Activated CD4-positive, alpha-beta T cell treated with anti-CD3 and anti-CD28 coated beads, Interleukin-2, amount 10 ng/mL, durations not matched to agents 24 days and 14 days (primary cell): ENCODE measurements at regions of chr5 and their contacts with region 1.

Region 1: DNA sequence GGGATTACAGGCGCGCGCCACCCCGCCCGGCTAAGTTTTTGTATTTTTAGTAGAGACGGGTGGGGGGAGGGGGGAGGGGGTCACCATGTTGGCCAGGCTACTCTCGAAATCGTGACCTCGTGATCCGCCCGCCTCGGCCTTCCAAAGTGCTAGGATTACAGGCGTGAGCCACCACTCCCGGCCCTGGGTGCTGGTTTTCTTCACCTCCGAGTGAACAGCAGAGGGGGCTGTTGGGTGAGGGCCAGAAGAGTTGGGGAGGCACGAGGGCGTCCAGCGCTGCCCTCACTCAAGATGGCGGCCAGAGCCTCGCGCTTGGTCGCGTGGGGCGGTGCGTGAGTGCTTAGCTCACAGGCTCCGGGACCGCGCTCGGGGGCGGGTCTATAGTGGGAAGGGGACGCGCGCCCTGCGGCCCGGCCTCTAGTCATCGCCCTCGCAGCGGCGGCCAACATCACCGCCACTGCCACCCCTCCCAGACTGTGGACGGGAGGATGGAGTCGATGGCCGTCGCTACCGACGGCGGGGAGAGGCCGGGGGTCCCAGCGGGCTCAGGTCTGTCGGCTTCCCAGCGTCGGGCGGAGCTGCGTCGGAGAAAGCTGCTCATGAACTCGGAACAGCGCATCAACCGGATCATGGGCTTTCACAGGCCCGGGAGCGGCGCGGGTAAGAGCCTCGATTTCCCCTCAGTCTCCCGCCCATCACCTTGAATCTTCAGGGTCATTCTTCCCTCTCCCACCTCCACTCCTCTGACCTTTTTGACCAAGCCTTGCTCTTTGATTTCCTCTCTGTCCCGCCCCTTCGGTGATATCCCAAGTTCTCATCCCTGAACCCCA is at the start of gene CAMLG:
- DNase-seq: peak; percentile 99
- H3K4me3 Mint-ChIP-seq: peak within 1 kb of the TSS; percentile 94
- H3K27ac Mint-ChIP-seq: peak within 1 kb of the TSS; percentile 91
- H3K4me1 Mint-ChIP-seq: peaks cover 13% of the 10 kb centered on the region
- H3K27me3 Mint-ChIP-seq: no peaks in the 10 kb centered on the region
- total RNA-seq, gene CAMLG: 28.2 and 28.3 TPM in 2 replicates

Region 2: GRCh38 chr5:133907075-133907474 is 831.3 kb before region 1 on chr5:
- intact Hi-C with region 1: no loop called
- DNase-seq: no peak
- H3K4me3 Mint-ChIP-seq: no peak overlapping the region
- H3K27ac Mint-ChIP-seq: no peak overlapping the region
- H3K4me1 Mint-ChIP-seq: no peaks in the 10 kb centered on the region
- H3K27me3 Mint-ChIP-seq: no peaks in the 10 kb centered on the region

Region 3: DNA sequence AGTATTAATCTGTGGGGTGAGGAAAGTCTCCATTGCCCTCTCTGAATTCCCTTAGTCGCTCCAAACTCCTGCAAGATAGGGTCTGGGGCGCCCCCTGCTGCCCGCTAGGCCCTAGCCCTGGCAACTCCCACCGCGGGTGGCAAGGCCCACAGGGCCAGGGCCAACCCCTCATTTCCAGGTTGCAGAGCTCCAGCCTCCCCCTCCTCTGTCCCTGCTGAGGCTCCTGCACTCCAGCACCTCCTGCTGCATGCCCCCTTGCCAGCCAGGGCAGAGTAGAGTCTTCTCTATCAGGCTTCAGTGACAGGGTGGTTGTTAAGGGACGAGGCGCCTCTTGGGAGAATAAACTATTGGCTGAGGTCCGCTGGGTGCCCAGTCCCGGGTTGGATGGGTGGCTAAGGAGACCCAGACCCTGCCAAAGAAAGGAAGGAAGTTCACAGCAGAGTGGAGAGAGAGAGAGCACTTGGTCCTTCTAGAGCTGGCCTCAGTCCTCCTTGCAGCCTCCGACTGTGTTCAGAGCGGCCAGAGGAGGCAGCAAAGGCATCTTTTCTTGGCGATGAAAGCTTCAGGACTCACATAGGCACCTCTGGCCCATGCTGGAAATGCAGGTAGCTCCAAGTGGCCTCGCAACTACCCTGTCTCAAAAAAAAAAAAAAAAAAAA is 151.4 kb before region 1 on chr5:
- intact Hi-C with region 1: no loop called
- DNase-seq: peak; percentile 95
- H3K4me3 Mint-ChIP-seq: peak overlapping the region; percentile 51
- H3K27ac Mint-ChIP-seq: peak overlapping the region; percentile 84
- H3K4me1 Mint-ChIP-seq: peaks cover 16% of the 10 kb centered on the region
- H3K27me3 Mint-ChIP-seq: no peaks in the 10 kb centered on the region

Region 4: GRCh38 chr5:134609232-134609851 is 129.0 kb before region 1 on chr5:
- intact Hi-C with region 1: loop called (anchors 1 kb)
- DNase-seq: peak; percentile 72
- H3K4me3 Mint-ChIP-seq: peak overlapping the region; percentile 76
- H3K27ac Mint-ChIP-seq: peak overlapping the region; percentile 95
- H3K4me1 Mint-ChIP-seq: peaks cover 51% of the 10 kb centered on the region
- H3K27me3 Mint-ChIP-seq: no peaks in the 10 kb centered on the region

Region 5: DNA sequence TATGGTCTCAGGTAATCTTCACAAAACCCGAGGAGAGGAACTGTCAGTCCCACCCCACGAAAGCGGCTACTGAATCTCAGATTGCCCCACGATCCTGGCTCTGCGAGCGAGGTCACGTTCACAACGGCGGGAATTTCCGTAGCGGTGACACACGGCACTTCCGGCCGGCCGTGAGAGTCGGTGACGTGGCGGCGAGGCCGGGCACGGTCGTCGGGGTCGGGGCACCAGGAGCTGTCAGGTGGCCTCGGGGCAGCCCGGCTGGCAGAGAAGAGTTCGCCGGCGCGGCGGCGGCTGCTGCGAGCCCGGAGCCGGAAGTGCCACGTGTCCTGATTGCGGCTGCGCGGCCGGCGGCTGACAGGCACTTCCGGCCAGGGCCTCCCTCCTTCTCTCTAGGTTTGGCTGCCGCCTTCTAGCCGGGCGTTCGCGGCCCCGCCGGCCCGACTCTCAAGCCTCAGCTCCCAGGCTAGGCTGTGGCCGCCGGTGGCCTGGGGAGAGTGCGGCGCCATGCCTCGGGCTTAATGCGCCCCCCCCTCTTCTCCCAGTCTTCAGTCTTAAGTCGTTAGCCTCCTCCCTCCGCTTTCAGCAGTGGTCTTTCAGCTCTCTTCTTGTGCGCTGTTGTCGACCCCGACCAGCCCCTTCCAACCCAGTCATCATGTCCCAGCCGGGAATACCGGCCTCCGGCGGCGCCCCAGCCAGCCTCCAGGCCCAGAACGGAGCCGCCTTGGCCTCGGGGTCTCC is 89.8 kb before region 1 on chr5 and contains the start of gene SEC24A:
- intact Hi-C with region 1: loop called (anchors 1 kb)
- DNase-seq: peak; percentile 97
- H3K4me3 Mint-ChIP-seq: peak within 1 kb of the TSS; percentile 94
- H3K27ac Mint-ChIP-seq: peak within 1 kb of the TSS; percentile 97
- H3K4me1 Mint-ChIP-seq: peaks cover 23% of the 10 kb centered on the region
- H3K27me3 Mint-ChIP-seq: no peaks in the 10 kb centered on the region
- total RNA-seq, gene SEC24A: 29.4 and 31.2 TPM in 2 replicates

Region 6: DNA sequence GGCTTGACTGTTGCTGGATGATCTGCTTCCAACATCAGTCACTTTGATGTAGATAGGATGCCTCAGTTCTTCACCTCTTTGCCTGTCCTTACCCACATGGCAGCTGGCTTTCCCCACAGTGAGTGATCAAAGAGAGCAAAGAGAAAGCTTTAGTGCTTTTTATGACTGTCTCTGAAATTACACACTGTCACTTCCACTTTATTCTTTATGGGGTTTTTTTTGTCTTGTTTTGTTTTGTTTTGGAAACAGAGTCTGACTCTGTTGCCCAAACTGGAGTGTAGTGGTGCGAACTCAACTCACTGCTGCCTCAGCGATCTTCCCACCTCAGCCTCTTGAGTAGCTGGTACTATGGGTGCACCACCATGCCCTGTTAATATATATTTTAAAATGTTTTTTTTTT is 75.1 kb after region 1 on chr5:
- intact Hi-C with region 1: loop called (anchors 2 kb)
- DNase-seq: peak; percentile 78
- H3K4me3 Mint-ChIP-seq: no peak overlapping the region
- H3K27ac Mint-ChIP-seq: peak overlapping the region; percentile 82
- H3K4me1 Mint-ChIP-seq: peaks cover 9% of the 10 kb centered on the region
- H3K27me3 Mint-ChIP-seq: no peaks in the 10 kb centered on the region

Region 7: DNA sequence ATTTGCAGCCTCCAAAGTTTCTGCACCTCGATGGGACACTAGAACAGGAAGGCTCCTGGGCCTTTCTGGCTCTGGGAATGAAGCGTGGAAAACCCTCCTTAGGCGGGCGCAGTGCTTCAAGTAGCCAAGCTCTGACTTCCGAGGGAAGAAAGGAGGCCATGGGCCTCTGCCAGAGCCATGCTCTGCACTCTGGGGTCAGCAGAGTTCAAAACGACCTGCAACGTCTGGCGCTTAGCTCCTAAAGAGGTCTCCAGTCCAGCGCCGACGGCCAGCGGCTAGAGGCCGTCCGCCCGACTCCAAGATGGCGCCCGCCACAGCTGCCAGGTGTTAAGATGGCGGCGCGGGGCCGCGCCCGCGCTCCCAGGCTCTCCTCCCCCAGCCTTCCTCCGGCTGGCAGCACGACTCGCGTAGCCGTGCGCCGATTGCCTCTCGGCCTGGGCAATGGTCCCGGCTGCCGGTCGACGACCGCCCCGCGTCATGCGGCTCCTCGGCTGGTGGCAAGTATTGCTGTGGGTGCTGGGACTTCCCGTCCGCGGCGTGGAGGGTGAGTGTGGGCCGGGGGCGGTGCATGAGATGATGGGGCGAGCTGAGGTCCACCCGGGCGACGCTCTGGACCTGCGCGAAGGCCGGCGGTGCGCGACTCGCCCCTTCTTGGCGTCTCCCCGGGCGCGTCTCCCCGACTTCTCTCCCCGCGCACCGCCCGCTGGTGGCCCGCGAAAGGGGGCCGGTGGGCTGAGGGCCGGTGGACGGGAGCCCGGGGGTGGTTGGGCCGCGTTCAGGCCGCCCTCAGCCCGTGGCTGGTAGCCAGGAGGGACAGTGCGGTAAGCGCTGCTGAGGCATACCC is 135.9 kb after region 1 on chr5 and contains the start of gene TXNDC15:
- intact Hi-C with region 1: loop called (anchors 1 kb)
- DNase-seq: peak; percentile 95
- H3K4me3 Mint-ChIP-seq: peak within 1 kb of the TSS; percentile 99
- H3K27ac Mint-ChIP-seq: peak within 1 kb of the TSS; percentile 98
- H3K4me1 Mint-ChIP-seq: peaks cover 30% of the 10 kb centered on the region
- H3K27me3 Mint-ChIP-seq: no peaks in the 10 kb centered on the region
- total RNA-seq, gene TXNDC15: 46.2 and 51.3 TPM in 2 replicates

Region 8: DNA sequence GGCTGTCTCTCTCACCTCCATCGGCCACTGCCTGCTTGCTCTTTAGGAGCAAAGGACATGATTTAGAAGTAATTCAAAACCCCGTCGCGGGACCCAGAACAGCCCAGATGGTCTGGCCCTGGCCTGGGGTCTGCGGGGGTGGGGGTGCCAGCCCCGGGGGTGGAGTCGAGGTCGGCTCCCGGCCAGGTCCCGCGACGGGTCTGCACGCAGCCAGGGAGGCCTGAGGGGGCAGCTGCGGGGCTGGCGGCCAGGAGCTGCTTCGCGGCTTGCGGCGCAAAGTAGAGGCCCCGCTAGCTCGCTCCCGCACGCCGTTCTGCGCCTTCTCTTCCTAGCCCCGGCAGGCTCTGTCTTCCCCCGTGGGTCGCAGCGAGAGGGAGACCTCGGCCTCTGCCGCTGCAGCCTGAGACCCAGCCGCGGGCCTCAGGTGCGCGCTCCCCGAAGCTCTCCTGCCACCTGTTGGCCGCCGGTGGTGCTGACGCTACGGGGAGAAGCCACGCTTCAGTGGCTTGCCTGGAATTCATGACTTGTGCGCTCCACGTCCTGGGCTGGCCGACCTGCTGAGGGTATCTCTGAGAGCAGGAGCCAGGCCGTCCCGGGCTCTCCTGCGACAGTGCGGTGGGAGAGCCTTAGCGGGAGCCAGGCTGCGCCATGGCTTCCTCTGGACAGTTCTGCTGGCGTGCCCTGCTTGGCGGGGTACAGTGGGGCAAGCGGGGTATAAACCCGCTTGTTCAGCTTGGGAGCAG is 452.9 kb after region 1 on chr5:
- intact Hi-C with region 1: loop called (anchors 5 kb)
- DNase-seq: peak; percentile 93
- H3K4me3 Mint-ChIP-seq: peak overlapping the region; percentile 81
- H3K27ac Mint-ChIP-seq: no peak overlapping the region
- H3K4me1 Mint-ChIP-seq: no peaks in the 10 kb centered on the region
- H3K27me3 Mint-ChIP-seq: peaks cover 70% of the 10 kb centered on the region

Region 9: GRCh38 chr5:135230251-135230925 is 492.0 kb after region 1 on chr5:
- intact Hi-C with region 1: no loop called
- DNase-seq: no peak
- H3K4me3 Mint-ChIP-seq: no peak overlapping the region
- H3K27ac Mint-ChIP-seq: no peak overlapping the region
- H3K4me1 Mint-ChIP-seq: no peaks in the 10 kb centered on the region
- H3K27me3 Mint-ChIP-seq: peaks cover 11% of the 10 kb centered on the region